ENCODE measurements at regions of chr5 and their contacts with region 1.

Region 1: DNA sequence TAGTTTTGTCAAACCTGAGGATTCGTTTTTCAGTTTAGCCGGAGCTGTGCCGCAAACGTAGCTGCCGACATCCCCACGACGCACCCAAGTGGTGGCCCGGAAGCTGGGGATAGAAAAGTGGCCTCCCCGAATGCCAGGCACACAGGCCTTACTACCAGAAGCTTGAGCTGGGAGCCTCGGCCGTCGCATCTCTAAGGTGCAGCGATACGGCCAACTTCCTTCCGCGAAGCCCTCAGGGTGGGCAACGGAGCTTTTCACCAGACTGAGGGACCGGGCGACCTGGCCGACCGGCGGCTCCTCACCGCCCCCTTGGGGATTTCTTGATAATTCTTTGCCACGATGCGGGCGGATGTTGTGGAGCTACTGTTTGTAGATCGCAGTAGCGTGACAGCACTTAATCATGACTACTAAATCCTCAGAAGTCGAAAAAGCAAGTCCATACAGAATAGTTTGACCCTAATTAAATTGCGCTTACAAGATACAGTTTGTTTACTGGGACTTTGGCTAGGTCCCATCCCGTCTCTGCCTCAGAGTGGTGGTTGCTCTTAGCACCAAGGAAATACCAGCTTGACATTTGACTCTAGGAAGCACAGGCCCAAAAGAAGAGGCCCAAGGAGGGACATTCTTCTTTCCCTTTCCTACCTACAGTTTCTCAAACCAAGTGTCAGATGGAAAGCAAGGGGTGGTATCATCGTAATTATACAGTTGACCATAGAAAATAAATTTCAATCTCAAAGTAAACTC is 613 bp upstream of the TMEM267 start:
- DNase-seq: peak; percentile 91
- H3K4me3 ChIP-seq: peak overlapping the region; percentile 82 to 93 (median 87)
- H3K27ac ChIP-seq: peak overlapping the region; percentile 95 to 97 (median 95)
- H3K4me1 ChIP-seq: peaks cover 0 to 23% (median 19%) of the 10 kb centered on the region in 4 donors
- H3K27me3 ChIP-seq: no peaks in the 10 kb centered on the region
- CTCF ChIP-seq: peak; percentile 24 to 83 (median 78)
- EP300 ChIP-seq: no peak
- POLR2A ChIP-seq: peak in 1 of 2 donors; percentile 9

Region 2: GRCh38 chr5:43191740-43192557 is 292.3 kb before region 1 on chr5 and contains the start of gene NIM1K:
- intact Hi-C with region 1: loop called (anchors 2 kb)
- DNase-seq: peak; percentile 87
- H3K4me3 ChIP-seq: peak within 1 kb of the TSS; percentile 36 to 74 (median 59)
- H3K27ac ChIP-seq: peak within 1 kb of the TSS; percentile 58 to 62 (median 60)
- H3K4me1 ChIP-seq: peaks cover 0 to 28% (median 18%) of the 10 kb centered on the region in 4 donors
- H3K27me3 ChIP-seq: no peaks in the 10 kb centered on the region
- CTCF ChIP-seq: no peak
- EP300 ChIP-seq: no peak
- POLR2A ChIP-seq: no peak
- total RNA-seq, gene NIM1K: 0.28 to 3.6 (median 0.83) TPM

Region 3: DNA sequence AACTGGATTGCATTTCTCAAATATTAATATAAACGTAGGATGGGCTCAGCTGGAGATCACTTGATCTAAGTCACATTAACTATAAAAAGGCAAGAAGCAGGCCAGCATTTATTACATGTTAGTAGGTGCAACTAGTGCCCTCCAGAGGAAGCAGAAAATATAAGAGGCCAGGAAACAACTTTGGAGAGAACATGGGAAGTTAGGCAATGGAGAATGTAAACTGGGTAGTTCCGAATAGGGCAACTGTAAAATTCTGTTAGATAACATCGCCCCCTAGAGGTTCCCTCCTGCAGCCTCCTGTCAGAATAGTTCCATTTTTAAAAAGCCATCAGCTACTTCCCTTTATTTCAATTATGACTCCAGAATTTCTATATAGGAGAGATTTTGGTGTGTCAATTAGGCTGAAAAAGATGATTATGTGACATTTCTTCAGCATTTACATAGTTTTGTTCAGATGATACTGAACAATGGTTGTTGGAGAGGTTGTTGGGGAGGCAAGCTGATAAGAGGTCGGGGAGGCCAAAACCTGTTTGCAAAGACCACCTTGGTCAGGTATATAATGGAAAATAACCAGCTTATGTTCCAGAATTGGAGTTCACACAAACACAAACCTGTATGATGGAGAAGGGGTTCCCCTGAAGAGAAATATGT is 94.5 kb before region 1 on chr5:
- intact Hi-C with region 1: loop called (anchors 10 kb)
- DNase-seq: no peak
- H3K4me3 ChIP-seq: no peak overlapping the region
- H3K27ac ChIP-seq: no peak overlapping the region
- H3K4me1 ChIP-seq: peaks cover 0 to 9% (median 0%) of the 10 kb centered on the region in 4 donors
- H3K27me3 ChIP-seq: no peaks in the 10 kb centered on the region
- CTCF ChIP-seq: peak; percentile 43 to 66 (median 62)
- EP300 ChIP-seq: no peak
- POLR2A ChIP-seq: no peak

Region 4: DNA sequence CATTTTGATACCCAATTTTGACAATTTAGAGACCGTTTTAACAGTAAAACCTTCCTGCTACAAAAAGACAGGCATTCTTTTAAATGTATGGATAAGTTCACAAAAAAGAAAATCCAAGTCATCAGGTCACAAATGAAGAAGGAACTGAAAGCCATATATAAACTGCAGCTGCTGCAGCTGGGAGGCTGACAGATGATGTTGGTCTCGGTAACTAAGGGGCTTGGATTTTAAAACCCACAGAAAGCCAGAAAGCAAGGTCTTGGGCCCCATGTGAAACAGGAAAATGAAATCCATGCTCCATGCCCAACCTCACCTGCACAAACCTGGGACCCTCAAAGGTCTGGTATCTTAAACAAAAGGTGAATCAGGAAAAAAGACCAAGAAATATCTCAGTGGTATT is 46.4 kb after region 1 on chr5:
- intact Hi-C with region 1: no loop called
- DNase-seq: no peak
- H3K4me3 ChIP-seq: no peak overlapping the region
- H3K27ac ChIP-seq: no peak overlapping the region
- H3K4me1 ChIP-seq: no peaks in the 10 kb centered on the region
- H3K27me3 ChIP-seq: no peaks in the 10 kb centered on the region
- CTCF ChIP-seq: no peak
- EP300 ChIP-seq: no peak
- POLR2A ChIP-seq: no peak

Region 5: DNA sequence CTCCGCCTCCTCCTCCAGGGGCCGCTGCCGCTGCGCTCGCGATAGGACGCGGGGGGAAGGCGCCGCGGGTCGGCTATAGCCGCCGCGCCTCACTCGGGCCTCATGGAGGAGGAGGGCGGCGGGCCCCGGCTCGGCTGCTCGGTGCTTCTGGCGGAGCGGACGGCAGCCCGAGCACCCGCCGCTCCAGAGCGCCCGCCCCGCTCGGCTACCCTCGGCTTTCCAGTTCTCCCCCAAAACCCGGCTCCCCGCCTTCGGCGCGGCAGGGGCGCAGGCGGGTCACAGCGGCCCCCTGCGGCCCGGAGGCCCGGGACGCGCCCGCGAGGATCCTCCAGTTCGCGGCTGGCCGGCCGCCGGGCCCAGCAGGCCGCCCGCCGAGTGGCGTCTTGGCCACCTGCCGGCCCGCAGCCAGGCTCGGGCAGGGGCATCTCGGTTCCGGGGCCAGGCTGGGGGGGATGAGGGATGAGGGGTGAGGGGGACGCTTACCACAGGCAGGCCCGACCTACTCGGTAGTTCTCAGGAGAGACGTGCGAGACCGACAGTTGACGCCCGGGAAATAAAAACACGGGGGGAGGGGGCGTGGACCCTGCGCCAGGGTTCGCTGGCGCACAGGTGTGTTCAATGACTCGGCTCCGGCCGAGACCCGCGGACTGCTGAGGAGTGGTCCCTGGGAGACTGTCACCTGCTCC is 72.7 kb after region 1 on chr5 and contains the start of gene PAIP1:
- intact Hi-C with region 1: loop called (anchors 1 kb)
- DNase-seq: peak; percentile 91
- H3K4me3 ChIP-seq: peak within 1 kb of the TSS; percentile 78 to 85 (median 84)
- H3K27ac ChIP-seq: peak within 1 kb of the TSS; percentile 92 to 97 (median 96)
- H3K4me1 ChIP-seq: peaks cover 0 to 44% (median 37%) of the 10 kb centered on the region in 4 donors
- H3K27me3 ChIP-seq: no peaks in the 10 kb centered on the region
- CTCF ChIP-seq: peak in 2 of 4 experiments; percentile 4 to 75
- EP300 ChIP-seq: no peak
- POLR2A ChIP-seq: peak in 1 of 2 donors; percentile 7
- total RNA-seq, gene PAIP1: 89.9 to 123 (median 112) TPM

Region 6: DNA sequence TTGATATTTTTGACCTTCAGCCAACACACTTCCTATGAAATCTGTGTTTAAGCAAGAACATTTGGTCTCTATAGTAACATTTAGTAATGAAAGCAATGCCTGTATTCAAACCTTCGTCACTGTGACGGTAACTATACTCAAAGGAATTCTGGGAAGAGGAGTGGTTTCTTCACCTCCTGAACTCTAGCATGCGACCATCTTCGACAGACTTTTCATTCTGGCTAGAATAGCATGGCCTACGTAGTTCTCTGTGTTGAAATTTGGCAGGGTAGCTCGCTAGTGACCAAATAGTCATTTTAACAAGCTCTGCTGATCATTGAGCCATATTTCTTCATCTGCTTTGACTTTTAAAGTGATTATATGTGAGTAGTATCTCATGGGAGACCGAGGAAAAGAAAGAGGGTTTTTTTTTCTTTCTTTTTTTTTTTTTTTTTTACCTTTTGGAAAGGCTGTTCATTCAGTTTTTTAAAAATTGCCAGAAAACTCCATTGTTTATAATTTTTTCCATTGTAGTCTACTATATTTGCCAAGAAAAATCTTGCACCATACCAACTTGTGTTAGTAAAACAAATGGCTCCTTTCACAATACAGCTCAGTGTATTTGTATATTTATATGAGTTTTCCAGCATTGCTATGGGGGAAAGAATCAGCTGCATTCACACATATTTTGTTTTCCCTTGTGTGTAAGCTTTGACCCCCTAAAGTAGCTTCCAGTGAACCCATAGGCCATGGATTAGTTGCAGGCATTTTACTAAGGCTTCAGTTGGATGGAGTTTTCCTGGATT is 285.5 kb after region 1 on chr5:
- intact Hi-C with region 1: no loop called
- DNase-seq: peak; percentile 87
- H3K4me3 ChIP-seq: no peak overlapping the region
- H3K27ac ChIP-seq: peak overlapping the region; percentile 37 to 69 (median 51)
- H3K4me1 ChIP-seq: peaks cover 0 to 15% (median 12%) of the 10 kb centered on the region in 4 donors
- H3K27me3 ChIP-seq: no peaks in the 10 kb centered on the region
- CTCF ChIP-seq: no peak
- EP300 ChIP-seq: peak; percentile 62 to 92 (median 80)
- POLR2A ChIP-seq: no peak